ENCODE measurements at regions of chr1 and their contacts with region 1.

Region 1: GRCh38 chr1:46718727-46719622 is at the start of gene EFCAB14:
- DNase-seq: peak; percentile 100
- H3K4me3 Mint-ChIP-seq: peak within 1 kb of the TSS; percentile 90
- H3K27ac Mint-ChIP-seq: peak within 1 kb of the TSS; percentile 85
- H3K4me1 Mint-ChIP-seq: peaks cover 37% of the 10 kb centered on the region
- H3K27me3 Mint-ChIP-seq: no peaks in the 10 kb centered on the region
- total RNA-seq, gene EFCAB14: 47.1 to 48.0 TPM

Region 2: DNA sequence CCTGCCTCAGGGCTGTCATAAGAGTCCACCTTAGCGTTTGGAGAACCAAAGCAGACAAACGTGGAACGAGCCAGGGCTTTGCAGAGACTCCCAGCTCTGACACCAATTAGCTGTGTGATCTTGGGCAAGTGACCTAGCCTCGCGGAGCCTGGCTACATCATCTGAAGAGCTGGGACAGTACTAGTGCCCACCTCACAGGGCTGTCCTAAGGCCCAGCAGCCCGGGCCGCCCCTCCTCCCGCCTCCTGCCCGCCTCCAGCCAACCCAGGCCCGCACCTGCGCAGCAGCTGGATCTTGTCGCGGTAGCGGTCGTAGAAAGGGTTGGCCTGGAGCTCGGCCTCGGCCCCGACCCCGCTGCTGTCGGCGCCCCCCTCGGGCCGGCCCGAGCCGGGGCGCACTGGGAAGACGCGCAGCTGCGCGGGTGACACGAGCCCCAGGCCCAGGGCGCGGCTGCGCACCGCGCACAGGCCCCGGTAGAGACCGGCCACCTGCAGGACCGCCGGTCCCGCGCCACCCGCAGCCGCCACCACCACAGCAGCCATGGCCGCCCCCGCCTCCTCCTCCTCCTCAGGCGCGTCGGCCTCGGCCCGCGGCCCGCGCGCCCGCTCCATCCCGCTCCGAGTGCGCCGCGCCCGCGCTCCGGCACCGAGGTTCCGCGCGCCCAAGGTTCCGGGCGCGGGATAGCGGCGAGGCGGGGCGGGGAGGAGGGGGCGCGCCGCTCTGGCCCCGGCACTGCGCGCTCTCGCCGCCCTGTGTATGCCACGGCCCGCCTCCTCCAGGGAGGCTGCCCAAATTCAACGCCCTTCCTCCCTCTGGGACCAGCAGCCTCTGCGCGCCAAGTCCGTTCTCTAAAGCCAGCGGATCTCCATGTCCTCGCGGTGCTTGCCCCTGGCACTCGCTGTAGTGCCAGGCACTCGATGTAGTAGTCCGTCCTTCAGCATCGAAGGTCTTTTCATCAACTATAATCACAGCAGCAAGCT is 50.9 kb before region 1 on chr1 and contains the start of gene ATPAF1:
- CTCF ChIA-PET with region 1: interaction called, 3 read pairs
- POLR2A ChIA-PET with region 1: interaction called, 5 read pairs
- intact Hi-C with region 1: loop called (anchors 1 kb)
- DNase-seq: peak; percentile 85
- H3K4me3 Mint-ChIP-seq: no peak within 1 kb of the TSS
- H3K27ac Mint-ChIP-seq: peak within 1 kb of the TSS; percentile 36
- H3K4me1 Mint-ChIP-seq: peaks cover 16% of the 10 kb centered on the region
- H3K27me3 Mint-ChIP-seq: no peaks in the 10 kb centered on the region
- total RNA-seq, gene ATPAF1: 45.0 to 45.9 TPM

Region 3: GRCh38 chr1:46940307-46940706 is 221.3 kb after region 1 on chr1:
- CTCF ChIA-PET with region 1: no interaction called
- POLR2A ChIA-PET with region 1: no interaction called
- intact Hi-C with region 1: no loop called
- DNase-seq: no peak
- H3K4me3 Mint-ChIP-seq: no peak overlapping the region
- H3K27ac Mint-ChIP-seq: no peak overlapping the region
- H3K4me1 Mint-ChIP-seq: no peaks in the 10 kb centered on the region
- H3K27me3 Mint-ChIP-seq: peaks cover 2% of the 10 kb centered on the region

Measured in activated CD4-positive, alpha-beta memory T cell treated with anti-CD3 and anti-CD28 coated beads for 36 hours (primary cell).